Left ventricle myocardium inferior (tissue), 1 donor: ENCODE measurements at regions of chr12 and their contacts with region 1.

Region 1: DNA sequence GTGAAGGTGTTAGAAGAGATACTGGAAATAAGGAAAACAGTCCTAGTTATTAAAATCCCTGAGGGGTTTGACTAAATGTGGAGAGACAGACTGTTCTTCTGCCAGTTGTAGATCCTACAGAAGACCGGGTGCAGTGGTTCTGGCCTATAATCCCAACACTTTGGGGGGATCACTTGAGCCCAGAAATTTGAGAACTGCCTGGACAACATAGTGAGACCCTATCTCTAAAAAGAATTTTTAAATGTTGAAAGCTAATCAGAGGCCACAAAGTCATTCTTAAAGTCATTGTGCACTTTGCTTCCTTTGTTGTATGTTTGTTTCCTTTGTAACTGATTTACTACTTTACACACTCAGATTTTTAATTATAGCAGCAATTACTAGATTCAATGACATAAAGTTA is 61.2 kb upstream of the RASSF3 start:
- DNase-seq: no peak
- H3K4me3 ChIP-seq: no peak overlapping the region
- H3K27ac ChIP-seq: no peak overlapping the region
- H3K4me1 ChIP-seq: peaks cover 17% of the 10 kb centered on the region
- H3K27me3 ChIP-seq: no peaks in the 10 kb centered on the region
- CTCF ChIP-seq: no peak

Region 2: DNA sequence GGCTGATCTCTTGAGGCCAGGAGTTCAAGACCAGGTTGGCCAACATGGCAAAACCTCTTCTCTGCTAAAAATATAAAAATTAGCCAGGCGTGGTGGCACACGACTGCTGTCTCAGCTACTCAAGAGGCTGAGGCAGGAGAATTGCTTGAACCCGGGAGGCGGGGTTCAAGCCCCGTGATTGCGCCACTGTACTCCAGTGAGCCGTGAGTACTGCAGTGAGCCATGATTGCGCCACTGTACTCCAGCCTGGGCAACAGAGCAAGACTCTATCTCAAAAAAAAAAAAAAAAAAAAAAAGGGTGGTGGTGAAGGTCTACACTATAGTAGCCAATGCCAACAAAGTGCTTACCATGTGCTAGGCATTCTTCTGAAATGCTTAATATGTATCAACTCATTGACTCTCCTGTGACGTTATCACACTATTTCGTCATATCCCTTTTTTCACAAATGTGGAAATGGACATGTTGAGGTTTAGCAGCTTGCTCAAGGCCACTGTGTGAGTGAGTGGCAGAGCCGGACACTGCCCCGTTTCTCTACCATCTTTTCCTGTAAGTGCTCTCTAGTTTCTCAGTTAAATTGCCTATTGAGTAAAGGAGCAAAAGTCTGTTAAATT is 150.5 kb after region 1 on chr12:
- intact Hi-C with region 1: loop called (anchors 2 kb)
- DNase-seq: no peak
- H3K4me3 ChIP-seq: no peak overlapping the region
- H3K27ac ChIP-seq: no peak overlapping the region
- H3K4me1 ChIP-seq: peaks cover 24% of the 10 kb centered on the region
- H3K27me3 ChIP-seq: no peaks in the 10 kb centered on the region
- CTCF ChIP-seq: no peak

Region 3: DNA sequence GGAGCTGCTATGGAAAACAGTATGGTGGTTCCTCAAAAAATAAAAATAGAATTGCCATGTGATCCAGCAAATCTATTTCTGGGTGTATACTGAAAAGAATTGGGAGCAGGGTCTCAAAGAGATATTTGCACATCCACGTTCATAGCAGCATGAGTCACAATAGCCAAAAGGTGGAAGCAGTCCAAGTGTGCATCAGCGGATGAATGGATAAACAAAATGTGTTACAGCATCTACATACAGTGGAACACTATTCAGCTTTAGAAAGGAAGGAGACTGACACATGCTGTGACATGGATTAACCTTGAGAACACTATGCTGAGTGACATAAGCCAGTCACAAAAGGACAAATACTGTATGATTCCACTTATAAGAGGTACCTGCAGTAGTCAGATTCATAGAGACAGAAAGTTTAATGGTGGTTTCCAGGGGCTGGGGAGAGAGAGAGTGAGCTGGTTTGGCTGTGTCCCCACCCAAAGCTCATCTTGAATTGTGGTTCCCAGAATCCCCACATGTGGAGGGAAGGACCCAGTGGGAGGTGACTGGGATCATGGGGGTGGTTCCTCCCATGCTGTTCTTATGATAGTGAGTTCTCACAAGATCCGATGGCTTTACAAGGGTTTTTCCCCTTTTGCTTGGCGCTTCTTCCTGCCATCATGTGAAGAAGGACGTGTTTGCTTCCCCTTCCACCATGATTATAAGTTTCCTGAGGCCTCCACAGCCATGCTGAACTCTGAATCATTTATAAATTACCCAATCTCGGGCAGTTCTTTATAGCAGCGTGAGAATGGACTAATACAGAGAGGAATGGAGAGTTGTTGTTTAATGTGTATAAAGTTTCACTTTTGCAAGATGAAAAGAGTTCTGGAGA is 257.7 kb after region 1 on chr12:
- intact Hi-C with region 1: no loop called
- DNase-seq: no peak
- H3K4me3 ChIP-seq: no peak overlapping the region
- H3K27ac ChIP-seq: no peak overlapping the region
- H3K4me1 ChIP-seq: peaks cover 7% of the 10 kb centered on the region
- H3K27me3 ChIP-seq: peaks cover 6% of the 10 kb centered on the region
- CTCF ChIP-seq: no peak